Heart right ventricle (tissue), 16 donors: ENCODE measurements at regions of chr9 and their contacts with region 1.

Region 1: DNA sequence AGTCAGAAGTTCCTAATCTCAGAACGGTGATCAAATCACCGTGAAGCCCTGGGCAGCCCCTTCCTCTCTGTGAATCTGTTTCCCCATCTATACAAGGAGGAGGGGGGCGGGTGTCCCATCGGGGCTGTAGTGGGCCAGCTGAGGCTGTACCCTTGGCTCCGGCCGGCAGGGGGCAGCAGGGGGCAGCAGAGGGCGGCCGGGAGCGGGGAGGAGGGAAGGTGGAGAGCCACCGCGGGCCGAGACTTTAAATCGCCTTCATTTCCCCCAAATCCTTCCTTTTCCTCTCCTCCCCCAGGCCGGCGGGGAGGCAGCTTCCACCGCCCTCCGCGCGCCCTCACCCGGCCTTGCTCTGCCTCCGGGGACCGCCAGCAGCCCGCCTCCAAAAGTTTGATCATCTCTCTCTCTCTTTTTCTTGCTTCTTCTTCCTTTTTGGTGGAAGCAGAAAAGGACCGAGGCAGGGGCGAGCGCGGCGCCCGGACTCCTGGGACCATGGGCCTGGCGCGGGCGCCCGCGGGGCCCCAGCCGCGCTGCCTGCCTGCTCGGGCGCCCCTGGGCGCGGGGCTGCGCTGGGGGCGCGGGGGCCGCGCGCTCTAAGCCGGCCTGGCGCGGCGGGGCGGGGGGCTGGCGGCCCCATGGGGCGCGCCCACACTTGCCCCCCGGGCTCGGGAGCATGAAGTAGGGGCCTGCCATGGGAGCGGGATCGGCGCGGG is at the start of gene COL27A1:
- DNase-seq: peak; percentile 83 to 89
- ATAC-seq: peak; percentile 80 to 94 (median 90)
- H3K4me3 ChIP-seq: peak within 1 kb of the TSS; percentile 47 to 78 (median 66)
- H3K27ac ChIP-seq: peak within 1 kb of the TSS in 9 of 10 donors; percentile 45 to 81 (median 67)
- H3K4me1 ChIP-seq: peaks cover 7 to 36% (median 20%) of the 10 kb centered on the region in 9 donors
- H3K27me3 ChIP-seq: peaks cover 0 to 67% (median 34%) of the 10 kb centered on the region in 7 donors
- CTCF ChIP-seq: peak; percentile 88 to 97 (median 94)
- total RNA-seq, gene COL27A1: 4.1 to 11.5 (median 5.1) TPM

Region 2: GRCh38 chr9:114059047-114059803 is 96.2 kb before region 1 on chr9:
- intact Hi-C with region 1: no loop called
- DNase-seq: peak; percentile 56 to 65
- ATAC-seq: peak; percentile 40 to 90 (median 70)
- H3K4me3 ChIP-seq: no peak overlapping the region
- H3K27ac ChIP-seq: peak overlapping the region in 2 of 10 donors; percentile 21 to 25
- H3K4me1 ChIP-seq: peaks cover 0 to 20% (median 8%) of the 10 kb centered on the region in 9 donors
- H3K27me3 ChIP-seq: peaks cover 0 to 12% (median 0%) of the 10 kb centered on the region in 7 donors
- CTCF ChIP-seq: no peak

Region 3: DNA sequence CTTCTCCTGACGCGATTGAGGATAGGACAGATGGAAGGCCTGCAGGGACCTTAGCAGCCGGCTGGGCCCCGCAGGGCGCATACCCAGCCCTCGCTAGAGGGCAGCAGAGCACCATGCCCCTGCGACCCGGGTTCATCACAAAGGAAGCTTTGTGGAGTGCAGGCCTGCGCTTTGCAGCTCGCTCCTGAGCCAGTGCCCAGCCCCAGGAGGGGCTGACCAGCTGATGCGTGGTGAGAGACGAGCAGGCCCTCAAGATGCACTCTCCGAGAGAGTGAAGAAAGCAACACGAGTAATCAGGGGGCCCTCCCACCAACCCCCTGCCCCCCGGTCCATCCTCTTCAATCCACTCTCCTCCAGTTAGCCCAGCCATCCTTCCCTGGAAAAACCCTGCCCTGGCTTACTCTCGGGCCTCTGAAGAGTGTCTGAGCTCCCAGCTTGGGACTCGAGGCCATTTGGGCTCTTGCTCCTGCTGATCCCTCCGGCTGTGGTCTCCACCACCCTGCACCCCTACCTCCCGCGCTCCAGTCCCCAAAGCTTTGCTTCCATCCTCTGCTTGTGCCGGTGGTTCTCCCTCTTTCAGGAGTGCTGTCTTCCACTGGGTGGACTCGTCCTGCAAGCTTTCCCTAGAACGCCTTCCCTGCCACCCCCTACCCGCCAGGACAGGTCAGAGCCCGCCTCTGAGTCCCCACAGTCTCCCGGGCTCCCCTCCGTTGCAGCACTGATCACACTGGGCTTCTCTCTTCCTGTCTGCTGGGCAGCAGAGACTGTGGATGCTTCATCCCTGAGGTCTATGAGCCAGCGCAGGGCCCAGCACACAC is 47.2 kb before region 1 on chr9:
- intact Hi-C with region 1: loop called in 7 of 10 experiments (anchors 1 to 5 kb)
- DNase-seq: peak; percentile 70 to 84
- ATAC-seq: peak; percentile 94 to 97 (median 96)
- H3K4me3 ChIP-seq: no peak overlapping the region
- H3K27ac ChIP-seq: no peak overlapping the region
- H3K4me1 ChIP-seq: peaks cover 3 to 20% (median 9%) of the 10 kb centered on the region in 9 donors
- H3K27me3 ChIP-seq: peaks cover 0 to 10% (median 0%) of the 10 kb centered on the region in 7 donors
- CTCF ChIP-seq: peak; percentile 79 to 96 (median 93)

Region 4: GRCh38 chr9:114238891-114239875 is 83.8 kb after region 1 on chr9:
- intact Hi-C with region 1: loop called in 4 of 10 experiments (anchors 5 to 10 kb)
- DNase-seq: peak in 1 of 2 donors; percentile 66
- ATAC-seq: peak; percentile 52 to 85 (median 68)
- H3K4me3 ChIP-seq: no peak overlapping the region
- H3K27ac ChIP-seq: peak overlapping the region in 7 of 10 donors; percentile 39 to 77 (median 63)
- H3K4me1 ChIP-seq: peaks cover 8 to 54% (median 24%) of the 10 kb centered on the region in 9 donors
- H3K27me3 ChIP-seq: no peaks in the 10 kb centered on the region
- CTCF ChIP-seq: peak in 7 of 9 donors; percentile 28 to 63 (median 40)

Region 5: DNA sequence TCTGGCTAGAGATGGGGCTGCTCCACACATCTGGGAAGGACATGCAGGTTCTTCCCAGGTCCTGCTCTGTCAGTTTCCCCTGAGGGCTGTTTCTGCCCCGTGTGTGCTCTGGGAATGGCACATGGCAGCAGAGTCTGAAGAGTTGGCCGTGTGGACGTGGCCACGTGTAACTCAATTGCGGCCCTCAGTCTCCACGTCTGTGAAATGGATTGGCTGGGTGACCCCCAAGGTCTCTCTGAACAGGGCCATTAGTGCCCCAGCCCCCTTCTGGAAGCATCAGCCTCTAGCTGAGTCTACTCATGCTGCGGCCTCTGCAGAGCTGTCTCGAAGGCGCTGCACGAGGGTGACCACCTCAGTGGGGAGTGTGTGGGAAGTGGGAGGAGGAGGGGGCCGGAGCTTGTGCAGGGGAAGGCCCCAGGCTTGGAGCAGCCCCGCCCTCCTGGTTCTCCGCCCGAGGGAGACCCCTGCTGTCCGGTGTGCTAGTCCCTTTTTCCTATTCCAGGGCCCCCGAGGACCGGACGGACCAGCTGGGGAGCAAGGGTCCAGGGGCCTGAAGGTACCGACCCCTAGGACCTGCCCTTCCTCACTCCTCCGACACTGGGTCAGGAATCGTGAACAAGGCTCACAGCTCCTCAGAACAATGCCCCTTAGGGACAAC is 108.6 kb after region 1 on chr9:
- intact Hi-C with region 1: loop called in 3 of 10 experiments (anchors 5 to 10 kb)
- DNase-seq: peak in 1 of 2 donors; percentile 49
- ATAC-seq: peak in 5 of 8 donors; percentile 4 to 62 (median 53)
- H3K4me3 ChIP-seq: no peak overlapping the region
- H3K27ac ChIP-seq: no peak overlapping the region
- H3K4me1 ChIP-seq: peaks cover 0 to 13% (median 0%) of the 10 kb centered on the region in 9 donors
- H3K27me3 ChIP-seq: no peaks in the 10 kb centered on the region
- CTCF ChIP-seq: peak in 7 of 9 donors; percentile 14 to 56 (median 41)

Region 6: DNA sequence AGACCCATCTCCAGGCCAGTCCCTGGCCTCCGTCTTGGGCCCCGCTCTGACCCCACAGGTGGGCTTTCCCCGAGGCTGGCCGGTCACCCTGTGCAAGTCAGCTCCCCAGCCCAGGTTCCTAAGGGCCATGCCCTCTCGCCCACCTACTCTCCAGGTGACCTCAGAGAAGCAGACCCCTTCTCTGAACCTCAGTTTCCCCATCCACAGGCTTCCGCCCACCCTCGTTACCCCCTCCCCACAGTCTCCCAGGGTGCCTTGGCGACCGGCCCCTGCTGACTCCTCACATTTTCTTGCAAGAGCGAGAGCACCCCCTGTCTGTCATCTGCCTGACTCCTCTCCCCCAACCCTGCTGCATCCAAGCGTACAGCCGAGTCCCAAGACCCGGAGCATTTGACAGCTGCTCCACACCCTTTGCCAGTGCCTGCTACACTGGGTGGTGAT is 116.2 kb after region 1 on chr9:
- intact Hi-C with region 1: loop called in 7 of 10 experiments (anchors 5 to 10 kb)
- DNase-seq: peak; percentile 41 to 55
- ATAC-seq: peak; percentile 46 to 82 (median 72)
- H3K4me3 ChIP-seq: no peak overlapping the region
- H3K27ac ChIP-seq: no peak overlapping the region
- H3K4me1 ChIP-seq: no peaks in the 10 kb centered on the region
- H3K27me3 ChIP-seq: no peaks in the 10 kb centered on the region
- CTCF ChIP-seq: peak in 8 of 9 donors; percentile 17 to 59 (median 50)

Region 7: GRCh38 chr9:114282926-114283325 is 127.5 kb after region 1 on chr9:
- intact Hi-C with region 1: loop called in 3 of 10 experiments (anchors 5 to 10 kb)
- DNase-seq: no peak
- ATAC-seq: no peak
- H3K4me3 ChIP-seq: no peak overlapping the region
- H3K27ac ChIP-seq: no peak overlapping the region
- H3K4me1 ChIP-seq: peaks cover 0 to 16% (median 5%) of the 10 kb centered on the region in 9 donors
- H3K27me3 ChIP-seq: no peaks in the 10 kb centered on the region
- CTCF ChIP-seq: no peak

Region 8: GRCh38 chr9:114291064-114291474 is 135.7 kb after region 1 on chr9:
- intact Hi-C with region 1: loop called in 8 of 10 experiments (anchors 2 to 10 kb)
- DNase-seq: peak; percentile 62 to 76
- ATAC-seq: peak; percentile 12 to 67 (median 48)
- H3K4me3 ChIP-seq: no peak overlapping the region
- H3K27ac ChIP-seq: no peak overlapping the region
- H3K4me1 ChIP-seq: no peaks in the 10 kb centered on the region
- H3K27me3 ChIP-seq: no peaks in the 10 kb centered on the region
- CTCF ChIP-seq: peak; percentile 87 to 96 (median 95)